ENCODE measurements at regions of chr1 and their contacts with region 1.

Region 1: DNA sequence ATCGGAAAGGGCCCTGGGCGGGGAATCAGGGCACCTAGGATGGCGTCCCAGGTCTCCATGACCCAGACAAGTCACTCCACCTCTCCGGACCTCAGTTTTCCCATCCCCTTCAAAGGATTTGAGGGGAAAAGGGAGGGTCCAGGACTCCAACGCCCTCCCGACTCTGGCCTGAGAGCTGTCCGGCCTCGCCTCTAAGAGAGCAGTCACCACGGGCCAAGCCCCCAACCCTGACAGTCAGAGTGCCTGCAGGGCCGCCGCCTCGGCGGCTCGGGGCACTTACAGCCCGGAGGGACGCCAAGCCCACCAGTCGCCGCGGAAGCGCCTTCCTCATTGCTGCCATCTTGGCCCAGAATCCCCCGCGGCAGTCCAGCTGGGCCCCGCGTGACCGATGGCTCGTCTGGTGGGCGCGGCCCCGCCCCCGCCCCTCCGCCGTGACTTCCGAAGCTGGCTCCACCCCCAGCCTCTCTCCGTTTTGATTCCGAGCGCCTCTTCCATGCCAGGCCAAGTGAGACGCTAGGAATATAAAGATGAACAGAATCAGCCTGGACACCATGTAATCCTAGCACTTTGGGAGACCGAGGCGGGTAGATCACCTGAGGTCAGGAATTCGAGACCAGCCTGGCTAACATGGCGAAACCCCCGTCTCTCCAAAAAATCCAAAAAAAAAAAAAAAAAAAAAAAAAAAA is at the start of gene HMGCL:
- H3K4me3 Mint-ChIP-seq: peak within 1 kb of the TSS; percentile 91
- H3K27ac Mint-ChIP-seq: peak within 1 kb of the TSS; percentile 99
- H3K4me1 Mint-ChIP-seq: peaks cover 38% of the 10 kb centered on the region
- H3K27me3 Mint-ChIP-seq: no peaks in the 10 kb centered on the region

Region 2: GRCh38 chr1:23838401-23838866 is 13.2 kb after region 1 on chr1:
- intact Hi-C with region 1: loop called (anchors 2 kb)
- H3K4me3 Mint-ChIP-seq: peak overlapping the region; percentile 69
- H3K27ac Mint-ChIP-seq: peak overlapping the region; percentile 58
- H3K4me1 Mint-ChIP-seq: peaks cover 23% of the 10 kb centered on the region
- H3K27me3 Mint-ChIP-seq: peaks cover 4% of the 10 kb centered on the region

Region 3: GRCh38 chr1:24055681-24056080 is 230.5 kb after region 1 on chr1:
- intact Hi-C with region 1: no loop called
- H3K4me3 Mint-ChIP-seq: no peak overlapping the region
- H3K27ac Mint-ChIP-seq: no peak overlapping the region
- H3K4me1 Mint-ChIP-seq: peaks cover 8% of the 10 kb centered on the region
- H3K27me3 Mint-ChIP-seq: no peaks in the 10 kb centered on the region

Measured in dendritic cell treated with granulocyte-macrophage colony-stimulating factor and Interleukin-4, amounts not matched to agents 40 ng/mL and 50 ng/mL, for 4 days (primary cell).